PC-3 (cell line): ENCODE measurements at regions of chr7 and their contacts with region 1.

Region 1: GRCh38 chr7:30284298-30285066 is at the start of gene ZNRF2:
- DNase-seq: peak; percentile 99
- ATAC-seq: peak; percentile 89
- H3K4me3 ChIP-seq: peak within 1 kb of the TSS; percentile 83
- H3K27ac ChIP-seq: peak within 1 kb of the TSS; percentile 64
- H3K4me1 ChIP-seq: peaks cover 8% of the 10 kb centered on the region
- H3K27me3 ChIP-seq: no peaks in the 10 kb centered on the region
- CTCF ChIP-seq: peak; percentile 46; the same call in 1 of the 2 replicates
- total RNA-seq, gene ZNRF2: 13.1 and 15.8 TPM in 2 replicates

Region 2: DNA sequence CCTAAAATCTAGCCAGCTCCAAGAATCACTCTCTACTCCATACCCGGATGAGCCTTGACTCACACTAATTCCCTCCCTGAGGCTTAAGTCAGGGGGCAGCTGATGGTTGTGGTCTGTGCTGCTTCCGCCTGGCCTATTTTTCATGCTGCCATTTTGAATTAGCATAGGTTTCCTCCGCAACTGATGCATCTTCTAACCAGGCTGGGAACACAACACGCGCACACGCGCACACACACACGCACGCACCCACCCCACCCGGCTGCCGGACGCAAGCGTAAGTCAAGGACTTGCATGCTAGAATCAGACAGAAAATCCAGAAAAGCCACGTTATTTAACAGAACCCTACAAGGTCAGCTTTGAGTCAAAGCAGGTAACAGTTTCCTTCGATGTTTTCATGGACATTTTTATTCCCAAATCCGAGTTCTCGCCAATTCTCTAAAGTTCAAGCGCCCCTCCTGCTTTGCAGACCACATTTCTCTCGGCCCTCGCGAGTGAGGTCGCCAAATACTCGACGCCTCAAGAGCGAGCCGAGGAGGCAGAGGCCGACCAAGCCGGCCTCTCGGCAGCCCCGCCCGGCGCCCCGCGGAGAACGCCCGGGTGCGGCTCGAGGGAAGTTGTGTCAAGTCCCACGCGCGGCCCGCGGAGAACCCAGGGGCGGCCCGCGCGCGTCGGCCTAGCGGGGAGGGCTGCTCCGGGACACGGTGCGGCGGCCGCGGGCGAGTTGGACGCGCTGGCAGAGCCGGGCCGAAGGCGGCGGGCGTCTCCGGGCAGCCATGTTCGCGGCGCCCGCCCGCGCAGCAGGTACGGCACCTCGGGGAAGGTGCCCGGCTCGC is 295.8 kb before region 1 on chr7:
- CTCF ChIA-PET with region 1: no interaction called
- POLR2A ChIA-PET with region 1: no interaction called
- intact Hi-C with region 1: no loop called
- DNase-seq: peak; percentile 51
- ATAC-seq: peak; percentile 17
- H3K4me3 ChIP-seq: peak overlapping the region; percentile 97
- H3K27ac ChIP-seq: peak overlapping the region; percentile 94
- H3K4me1 ChIP-seq: peaks cover 41% of the 10 kb centered on the region
- H3K27me3 ChIP-seq: no peaks in the 10 kb centered on the region
- CTCF ChIP-seq: no peak

Region 3: DNA sequence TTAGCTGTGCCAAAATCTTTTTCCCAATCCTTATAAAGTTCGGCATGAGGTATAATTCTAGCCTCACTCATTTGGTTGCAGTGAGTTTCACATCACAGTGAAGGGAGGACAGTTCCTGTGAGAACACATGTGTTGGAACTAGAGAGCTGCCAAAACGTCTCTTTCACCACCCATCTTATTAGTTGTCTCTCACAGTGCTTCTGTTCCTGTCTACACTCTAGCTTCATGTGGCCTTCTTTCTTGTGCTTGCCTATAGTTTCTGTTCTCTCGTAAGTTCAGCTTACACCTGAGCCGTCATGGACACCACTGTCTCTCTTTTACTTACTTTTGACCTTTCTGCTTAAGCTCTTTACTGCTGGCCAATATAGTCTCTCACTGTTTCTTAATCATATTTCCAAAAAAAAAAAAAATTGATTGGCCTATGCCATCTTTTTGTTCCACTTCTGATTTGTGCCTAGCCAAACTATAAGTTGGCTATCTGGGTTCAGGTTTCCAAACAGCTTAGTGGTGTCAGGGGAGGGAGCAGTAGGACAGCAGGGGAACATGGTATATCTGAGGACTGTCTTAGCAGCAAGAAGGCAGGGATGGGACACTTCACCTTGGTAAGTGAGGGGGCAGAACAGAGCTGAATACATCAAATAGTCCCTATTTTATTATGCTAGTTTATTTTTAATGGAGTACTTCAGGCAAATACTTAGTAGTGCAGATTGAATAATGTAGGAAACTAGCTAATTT is 38.0 kb after region 1 on chr7:
- CTCF ChIA-PET with region 1: no interaction called
- POLR2A ChIA-PET with region 1: interaction called, 4 read pairs
- intact Hi-C with region 1: loop called (anchors 2 kb)
- DNase-seq: no peak
- ATAC-seq: peak; percentile 25
- H3K4me3 ChIP-seq: peak overlapping the region; percentile 45
- H3K27ac ChIP-seq: peak overlapping the region; percentile 53
- H3K4me1 ChIP-seq: peaks cover 59% of the 10 kb centered on the region
- H3K27me3 ChIP-seq: no peaks in the 10 kb centered on the region
- CTCF ChIP-seq: no peak

Region 4: GRCh38 chr7:30366606-30367005 is 82.1 kb after region 1 on chr7:
- CTCF ChIA-PET with region 1: no interaction called
- POLR2A ChIA-PET with region 1: interaction called, 17 read pairs
- intact Hi-C with region 1: no loop called
- DNase-seq: peak; percentile 28
- ATAC-seq: no peak
- H3K4me3 ChIP-seq: no peak overlapping the region
- H3K27ac ChIP-seq: no peak overlapping the region
- H3K4me1 ChIP-seq: peaks cover 10% of the 10 kb centered on the region; the same call in 1 of the 2 replicates
- H3K27me3 ChIP-seq: no peaks in the 10 kb centered on the region
- CTCF ChIP-seq: no peak

Region 5: DNA sequence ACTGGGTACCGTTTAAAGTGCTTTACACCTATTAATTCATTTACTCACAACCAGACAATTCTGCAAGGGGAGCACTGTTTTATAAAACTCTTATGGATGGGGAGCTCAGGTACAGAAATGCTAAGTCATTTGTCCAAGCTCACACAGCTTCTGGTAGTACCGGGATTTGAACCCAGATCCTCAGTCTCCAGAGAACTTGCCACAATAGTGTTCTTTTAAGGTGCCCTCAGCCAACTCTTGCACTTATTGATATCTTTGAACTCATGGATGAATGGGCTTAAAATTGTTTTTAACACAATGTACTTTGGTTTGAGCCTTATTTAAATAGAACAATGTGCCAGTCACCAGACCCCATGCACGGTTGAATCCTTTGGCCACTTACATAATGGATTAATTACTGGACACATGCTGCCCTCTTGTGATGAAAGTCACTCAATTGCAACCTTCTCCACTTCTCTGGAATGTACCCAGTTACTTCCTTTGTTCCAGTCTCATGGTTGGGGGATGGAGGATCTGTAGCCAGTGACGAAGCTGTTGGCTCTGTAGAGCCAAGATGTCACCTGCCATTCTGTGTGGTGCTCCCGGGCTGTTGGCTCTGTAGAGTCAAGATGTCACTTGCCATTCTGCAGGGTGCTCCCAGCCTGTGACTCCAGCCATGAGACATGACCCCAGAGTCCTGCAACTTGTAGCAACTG is 128.5 kb after region 1 on chr7:
- CTCF ChIA-PET with region 1: no interaction called
- POLR2A ChIA-PET with region 1: no interaction called
- intact Hi-C with region 1: loop called (anchors 2 kb)
- DNase-seq: peak; percentile 85
- ATAC-seq: peak; percentile 95
- H3K4me3 ChIP-seq: no peak overlapping the region
- H3K27ac ChIP-seq: no peak overlapping the region
- H3K4me1 ChIP-seq: no peaks in the 10 kb centered on the region
- H3K27me3 ChIP-seq: no peaks in the 10 kb centered on the region
- CTCF ChIP-seq: peak; percentile 83

Region 6: GRCh38 chr7:30478349-30479201 is 194.1 kb after region 1 on chr7 and contains the start of gene NOD1:
- CTCF ChIA-PET with region 1: no interaction called
- POLR2A ChIA-PET with region 1: interaction called, 17 read pairs
- intact Hi-C with region 1: no loop called
- DNase-seq: peak; percentile 78
- ATAC-seq: peak; percentile 91
- H3K4me3 ChIP-seq: peak within 1 kb of the TSS; percentile 87
- H3K27ac ChIP-seq: peak within 1 kb of the TSS; percentile 71
- H3K4me1 ChIP-seq: peaks cover 12% of the 10 kb centered on the region; the same call in 1 of the 2 replicates
- H3K27me3 ChIP-seq: no peaks in the 10 kb centered on the region
- CTCF ChIP-seq: no peak
- total RNA-seq, gene NOD1: 4.6 and 5.9 TPM in 2 replicates

Region 7: GRCh38 chr7:30504347-30505173 is 220.1 kb after region 1 on chr7 and contains the start of gene GGCT:
- CTCF ChIA-PET with region 1: interaction called, 4 read pairs
- POLR2A ChIA-PET with region 1: no interaction called
- intact Hi-C with region 1: loop called (anchors 5 kb)
- DNase-seq: peak; percentile 97
- ATAC-seq: peak; percentile 95
- H3K4me3 ChIP-seq: peak within 1 kb of the TSS; percentile 98
- H3K27ac ChIP-seq: peak within 1 kb of the TSS; percentile 36; the same call in 1 of the 2 replicates
- H3K4me1 ChIP-seq: peaks cover 43% of the 10 kb centered on the region
- H3K27me3 ChIP-seq: no peaks in the 10 kb centered on the region
- CTCF ChIP-seq: no peak
- total RNA-seq, gene GGCT: 64.1 and 67.6 TPM in 2 replicates